GM12878 (cell line): ENCODE measurements at regions of chr20 and their contacts with region 1.

Region 1: GRCh38 chr20:9407805-9408421 is 106.5 kb upstream of the LAMP5 start:
- DNase-seq: peak; percentile 53
- ATAC-seq: peak; percentile 94
- H3K4me3 ChIP-seq: no peak overlapping the region
- H3K27ac ChIP-seq: no peak overlapping the region
- H3K4me1 ChIP-seq: peaks cover 13% of the 10 kb centered on the region
- H3K27me3 ChIP-seq: no peaks in the 10 kb centered on the region
- CTCF ChIP-seq: peak; percentile 74 to 85 (median 85)
- EP300 ChIP-seq: no peak
- POLR2A ChIP-seq: no peak
- RAD21 ChIP-seq: peak; percentile 94

Region 2: DNA sequence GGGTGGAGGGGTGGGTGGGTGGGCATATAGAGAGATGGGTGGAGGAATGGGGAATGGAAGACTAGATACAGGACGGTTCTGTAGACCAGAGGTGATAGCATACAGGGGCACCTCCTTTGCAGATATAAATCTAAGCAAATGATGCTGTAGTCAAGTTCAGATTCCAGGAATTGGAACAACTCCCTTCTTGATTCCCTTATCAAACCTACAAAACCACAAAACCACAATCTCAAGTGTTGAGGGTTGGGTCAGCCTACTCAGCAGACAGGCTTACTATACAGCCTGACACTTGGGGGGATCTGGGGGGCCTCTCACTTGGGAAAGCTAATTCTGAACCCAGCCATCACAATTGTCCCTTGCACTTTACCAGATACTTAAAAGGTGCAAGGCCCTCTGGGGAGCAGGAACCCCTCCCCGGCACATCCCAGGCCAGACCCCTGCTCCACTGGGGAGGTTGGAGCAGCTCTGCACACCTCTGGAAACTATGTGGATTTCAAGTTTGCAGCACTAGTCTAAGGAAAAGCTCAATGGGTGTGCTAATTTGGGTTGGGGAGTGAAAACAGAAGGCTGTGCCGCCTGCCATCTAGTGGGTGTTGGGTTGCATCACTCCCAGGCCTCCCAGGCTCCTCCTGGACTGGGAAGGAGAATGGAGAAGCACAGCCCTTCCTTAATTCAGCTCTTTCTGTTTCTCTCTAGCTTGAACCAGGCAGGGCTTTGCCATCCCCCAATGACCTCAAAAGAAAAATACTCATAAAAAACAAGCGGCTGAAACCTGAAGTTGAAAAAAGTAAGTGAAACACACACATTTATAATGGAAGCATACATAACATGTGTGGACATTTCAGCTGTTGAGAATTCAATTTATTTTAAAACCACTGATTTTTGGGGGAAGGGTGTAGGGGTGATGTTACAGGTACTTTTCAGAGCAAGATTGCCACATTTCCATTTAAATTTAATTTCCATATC is 14.7 kb before region 1 on chr20:
- CTCF ChIA-PET with region 1: interaction called, 15 read pairs
- POLR2A ChIA-PET with region 1: no interaction called
- RAD21 ChIA-PET with region 1: no interaction called
- SMC1A ChIA-PET with region 1: interaction called, 4 read pairs
- in situ Hi-C with region 1: no loop called
- intact Hi-C with region 1: no loop called
- DNase-seq: no peak
- ATAC-seq: peak; percentile 80
- H3K4me3 ChIP-seq: no peak overlapping the region
- H3K27ac ChIP-seq: no peak overlapping the region
- H3K4me1 ChIP-seq: peaks cover 8% of the 10 kb centered on the region
- H3K27me3 ChIP-seq: no peaks in the 10 kb centered on the region
- CTCF ChIP-seq: peak; percentile 62 to 72 (median 64); a peak in 5 of 6 replicates
- EP300 ChIP-seq: no peak
- POLR2A ChIP-seq: no peak
- RAD21 ChIP-seq: peak; percentile 54

Region 3: GRCh38 chr20:9467995-9468394 is 60.1 kb after region 1 on chr20:
- CTCF ChIA-PET with region 1: interaction called, 4 read pairs
- POLR2A ChIA-PET with region 1: no interaction called
- RAD21 ChIA-PET with region 1: no interaction called
- SMC1A ChIA-PET with region 1: no interaction called
- in situ Hi-C with region 1: no loop called
- intact Hi-C with region 1: loop called (anchors 2 kb)
- DNase-seq: no peak
- ATAC-seq: peak; percentile 56; the same call in 2 of the 3 replicates
- H3K4me3 ChIP-seq: no peak overlapping the region
- H3K27ac ChIP-seq: no peak overlapping the region
- H3K4me1 ChIP-seq: no peaks in the 10 kb centered on the region
- H3K27me3 ChIP-seq: no peaks in the 10 kb centered on the region
- CTCF ChIP-seq: peak; percentile 37 to 69 (median 68)
- EP300 ChIP-seq: no peak
- POLR2A ChIP-seq: no peak
- RAD21 ChIP-seq: peak; percentile 46

Region 4: GRCh38 chr20:9602847-9603183 is 194.9 kb after region 1 on chr20:
- CTCF ChIA-PET with region 1: interaction called, 235 read pairs
- POLR2A ChIA-PET with region 1: no interaction called
- RAD21 ChIA-PET with region 1: no interaction called
- SMC1A ChIA-PET with region 1: interaction called, 22 read pairs
- in situ Hi-C with region 1: loop called (anchors 5 kb)
- intact Hi-C with region 1: no loop called
- DNase-seq: no peak
- ATAC-seq: no peak; the same call in 2 of the 3 replicates
- H3K4me3 ChIP-seq: peak overlapping the region; percentile 46; the same call in 1 of the 2 replicates
- H3K27ac ChIP-seq: no peak overlapping the region; the same call in 1 of the 2 replicates
- H3K4me1 ChIP-seq: peaks cover 6% of the 10 kb centered on the region; the same call in 1 of the 2 replicates
- H3K27me3 ChIP-seq: no peaks in the 10 kb centered on the region; a peak in 1 of 4 replicates
- CTCF ChIP-seq: no peak
- EP300 ChIP-seq: no peak
- POLR2A ChIP-seq: no peak
- RAD21 ChIP-seq: no peak

Region 5: DNA sequence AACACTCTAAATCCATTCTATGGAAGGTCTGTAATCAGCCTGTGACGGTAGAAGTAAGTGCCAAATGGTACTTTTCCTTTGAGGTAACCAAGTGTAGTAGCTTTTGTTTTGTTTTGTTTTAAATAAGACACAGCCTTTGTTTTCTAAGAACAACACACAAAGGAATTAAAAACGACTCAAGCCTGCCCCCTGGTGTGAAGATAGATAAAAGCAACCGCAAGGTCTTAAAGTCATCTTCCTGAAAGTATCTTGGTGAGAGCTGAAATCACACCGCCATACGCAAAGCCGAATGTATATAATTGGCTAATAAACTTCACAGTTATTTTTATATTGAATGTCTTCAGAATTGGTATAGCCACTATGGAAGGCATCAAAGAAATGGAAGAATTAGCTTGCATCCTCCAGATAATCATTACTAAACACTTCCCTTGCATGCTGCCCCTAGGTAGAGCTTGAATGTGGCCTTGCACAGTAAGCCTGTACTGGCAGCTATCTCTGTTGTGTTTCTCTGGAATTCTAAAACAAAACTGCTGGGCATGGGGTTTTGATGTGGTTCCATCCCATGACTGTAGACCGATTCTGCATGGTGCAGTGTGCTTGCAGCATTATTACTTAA is 202.1 kb after region 1 on chr20:
- CTCF ChIA-PET with region 1: interaction called, 235 read pairs
- POLR2A ChIA-PET with region 1: no interaction called
- RAD21 ChIA-PET with region 1: interaction called, 63 read pairs
- SMC1A ChIA-PET with region 1: interaction called, 71 read pairs
- in situ Hi-C with region 1: loop called (anchors 5 kb)
- intact Hi-C with region 1: loop called (anchors 1 kb)
- DNase-seq: peak; percentile 61
- ATAC-seq: peak; percentile 75
- H3K4me3 ChIP-seq: no peak overlapping the region
- H3K27ac ChIP-seq: no peak overlapping the region
- H3K4me1 ChIP-seq: peaks cover 3% of the 10 kb centered on the region; the same call in 1 of the 2 replicates
- H3K27me3 ChIP-seq: no peaks in the 10 kb centered on the region
- CTCF ChIP-seq: peak; percentile 41 to 69 (median 51); a peak in 5 of 6 replicates
- EP300 ChIP-seq: no peak
- POLR2A ChIP-seq: no peak
- RAD21 ChIP-seq: peak; percentile 74

Region 6: DNA sequence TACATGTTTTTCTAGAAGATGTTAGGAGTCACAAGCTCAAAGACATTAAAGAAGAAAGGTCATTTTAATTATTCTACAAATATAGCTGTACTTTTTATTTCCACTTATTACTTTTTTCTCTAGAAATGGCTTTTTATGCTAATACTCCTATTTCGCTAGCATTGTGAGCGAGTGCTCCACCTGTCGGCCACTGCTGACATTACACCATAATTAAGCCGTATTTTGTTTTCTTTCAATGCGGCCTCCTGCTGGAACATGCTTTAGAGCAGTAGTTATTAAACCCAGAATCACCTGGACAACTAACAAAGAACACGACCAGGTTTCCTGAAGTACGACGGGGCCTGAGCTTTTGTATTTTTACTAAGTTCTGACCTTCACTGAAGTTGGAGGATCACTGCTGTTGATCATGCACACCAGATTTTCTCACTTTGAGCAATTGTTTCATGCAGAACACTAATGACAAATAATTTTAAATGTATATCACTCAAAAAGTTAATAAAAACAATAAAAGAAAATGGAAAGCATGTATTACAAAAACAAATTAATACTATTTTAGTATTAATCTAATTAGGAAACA is 505.0 kb after region 1 on chr20:
- CTCF ChIA-PET with region 1: interaction called, 15 read pairs
- POLR2A ChIA-PET with region 1: no interaction called
- RAD21 ChIA-PET with region 1: no interaction called
- SMC1A ChIA-PET with region 1: interaction called, 4 read pairs
- in situ Hi-C with region 1: loop called (anchors 10 kb)
- intact Hi-C with region 1: loop called (anchors 1 kb)
- DNase-seq: no peak
- ATAC-seq: peak; percentile 42; the same call in 2 of the 3 replicates
- H3K4me3 ChIP-seq: no peak overlapping the region
- H3K27ac ChIP-seq: no peak overlapping the region
- H3K4me1 ChIP-seq: no peaks in the 10 kb centered on the region
- H3K27me3 ChIP-seq: no peaks in the 10 kb centered on the region; a peak in 1 of 4 replicates
- CTCF ChIP-seq: peak; percentile 70 to 79 (median 74)
- EP300 ChIP-seq: no peak
- POLR2A ChIP-seq: no peak
- RAD21 ChIP-seq: peak; percentile 47